ENCODE measurements at regions of chr19 and their contacts with region 1.

Region 1: GRCh38 chr19:54137086-54137921 is at the start of gene CNOT3:
- DNase-seq: peak; percentile 92
- ATAC-seq: peak; percentile 80
- H3K4me3 Mint-ChIP-seq: peak within 1 kb of the TSS; percentile 85
- H3K27ac Mint-ChIP-seq: peak within 1 kb of the TSS; percentile 90
- H3K4me1 Mint-ChIP-seq: peaks cover 51% of the 10 kb centered on the region
- H3K27me3 Mint-ChIP-seq: no peaks in the 10 kb centered on the region
- CTCF ChIP-seq: no peak
- total RNA-seq, gene CNOT3: 53.2 and 64.6 TPM in 2 replicates

Region 2: GRCh38 chr19:53867225-53868090 is 269.8 kb before region 1 on chr19 and contains the start of gene MYADM:
- CTCF ChIA-PET with region 1: no interaction called
- POLR2A ChIA-PET with region 1: interaction called, 4 read pairs
- intact Hi-C with region 1: loop called (anchors 1 kb)
- DNase-seq: peak; percentile 99
- ATAC-seq: peak; percentile 65
- H3K4me3 Mint-ChIP-seq: peak within 1 kb of the TSS; percentile 91
- H3K27ac Mint-ChIP-seq: peak within 1 kb of the TSS; percentile 93
- H3K4me1 Mint-ChIP-seq: peaks cover 44% of the 10 kb centered on the region
- H3K27me3 Mint-ChIP-seq: no peaks in the 10 kb centered on the region
- CTCF ChIP-seq: no peak
- total RNA-seq, gene MYADM: 10.9 and 12.9 TPM in 2 replicates

Region 3: GRCh38 chr19:53903064-53903680 is 234.1 kb before region 1 on chr19:
- CTCF ChIA-PET with region 1: no interaction called
- POLR2A ChIA-PET with region 1: no interaction called
- intact Hi-C with region 1: no loop called
- DNase-seq: no peak
- ATAC-seq: no peak
- H3K4me3 Mint-ChIP-seq: no peak overlapping the region
- H3K27ac Mint-ChIP-seq: peak overlapping the region; percentile 46
- H3K4me1 Mint-ChIP-seq: peaks cover 16% of the 10 kb centered on the region
- H3K27me3 Mint-ChIP-seq: peaks cover 62% of the 10 kb centered on the region
- CTCF ChIP-seq: no peak

Region 4: GRCh38 chr19:54014920-54015560 is 122.3 kb before region 1 on chr19:
- CTCF ChIA-PET with region 1: no interaction called
- POLR2A ChIA-PET with region 1: no interaction called
- intact Hi-C with region 1: no loop called
- DNase-seq: no peak
- ATAC-seq: no peak
- H3K4me3 Mint-ChIP-seq: no peak overlapping the region
- H3K27ac Mint-ChIP-seq: no peak overlapping the region
- H3K4me1 Mint-ChIP-seq: no peaks in the 10 kb centered on the region
- H3K27me3 Mint-ChIP-seq: peaks cover 9% of the 10 kb centered on the region
- CTCF ChIP-seq: no peak

Region 5: GRCh38 chr19:54115109-54116063 is 21.9 kb before region 1 on chr19 and contains the starts of genes PRPF31 and TFPT:
- CTCF ChIA-PET with region 1: interaction called, 4 read pairs
- POLR2A ChIA-PET with region 1: interaction called, 61 read pairs
- intact Hi-C with region 1: loop called (anchors 1 kb)
- DNase-seq: peak; percentile 90
- ATAC-seq: peak; percentile 93
- H3K4me3 Mint-ChIP-seq: peak within 1 kb of the TSS; percentile 94
- H3K27ac Mint-ChIP-seq: peak within 1 kb of the TSS; percentile 98
- H3K4me1 Mint-ChIP-seq: peaks cover 36% of the 10 kb centered on the region
- H3K27me3 Mint-ChIP-seq: no peaks in the 10 kb centered on the region
- CTCF ChIP-seq: no peak
- total RNA-seq, gene PRPF31: 78.9 and 79.3 TPM in 2 replicates
- total RNA-seq, gene TFPT: 16.6 and 17.9 TPM in 2 replicates

Region 6: GRCh38 chr19:54159352-54160181 is 22.3 kb after region 1 on chr19 and contains the start of gene LENG1:
- CTCF ChIA-PET with region 1: interaction called, 3 read pairs
- POLR2A ChIA-PET with region 1: interaction called, 69 read pairs
- intact Hi-C with region 1: loop called (anchors 1 kb)
- DNase-seq: peak; percentile 84
- ATAC-seq: peak; percentile 85
- H3K4me3 Mint-ChIP-seq: peak within 1 kb of the TSS; percentile 100
- H3K27ac Mint-ChIP-seq: peak within 1 kb of the TSS; percentile 99
- H3K4me1 Mint-ChIP-seq: peaks cover 51% of the 10 kb centered on the region
- H3K27me3 Mint-ChIP-seq: peaks cover 8% of the 10 kb centered on the region
- CTCF ChIP-seq: no peak
- total RNA-seq, gene LENG1: 8.3 and 8.4 TPM in 2 replicates

Region 7: GRCh38 chr19:54448774-54449700 is 311.7 kb after region 1 on chr19 and contains the start of gene LENG8:
- CTCF ChIA-PET with region 1: no interaction called
- POLR2A ChIA-PET with region 1: interaction called, 17 read pairs
- intact Hi-C with region 1: no loop called
- DNase-seq: peak; percentile 98
- ATAC-seq: peak; percentile 92
- H3K4me3 Mint-ChIP-seq: peak within 1 kb of the TSS; percentile 100
- H3K27ac Mint-ChIP-seq: peak within 1 kb of the TSS; percentile 97
- H3K4me1 Mint-ChIP-seq: peaks cover 49% of the 10 kb centered on the region
- H3K27me3 Mint-ChIP-seq: no peaks in the 10 kb centered on the region
- CTCF ChIP-seq: no peak
- total RNA-seq, gene LENG8: 296 and 363 TPM in 2 replicates